Posterior vena cava (tissue), 2 donors: ENCODE measurements at regions of chr10 and their contacts with region 1.

Region 1: GRCh38 chr10:110225756-110226542 is 18.5 kb downstream of the MXI1 start:
- DNase-seq: peak; percentile 97

Region 2: GRCh38 chr10:110273474-110273873 is 47.5 kb after region 1 on chr10:
- intact Hi-C with region 1: loop called (anchors 5 kb)
- DNase-seq: peak; percentile 80

Region 3: DNA sequence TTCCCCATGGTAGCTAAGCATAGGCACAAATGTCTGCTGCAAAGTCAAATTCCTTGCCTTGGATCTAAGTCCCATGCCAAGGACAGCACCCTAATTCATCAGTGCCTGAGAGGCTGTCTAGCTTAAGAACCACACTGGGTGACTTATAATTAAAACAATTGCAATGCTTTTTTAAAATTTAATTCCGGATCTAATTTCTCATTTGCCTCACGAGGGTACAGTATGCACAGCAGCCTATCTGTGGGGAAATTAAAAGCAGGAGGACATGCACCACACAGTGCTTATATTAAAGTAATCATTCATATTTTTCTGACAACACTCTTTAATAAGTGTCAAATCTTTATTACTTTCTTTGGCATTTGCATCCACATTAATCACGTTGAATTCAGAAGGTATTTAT is 1578.8 kb after region 1 on chr10:
- intact Hi-C with region 1: no loop called
- DNase-seq: no peak

Region 4: DNA sequence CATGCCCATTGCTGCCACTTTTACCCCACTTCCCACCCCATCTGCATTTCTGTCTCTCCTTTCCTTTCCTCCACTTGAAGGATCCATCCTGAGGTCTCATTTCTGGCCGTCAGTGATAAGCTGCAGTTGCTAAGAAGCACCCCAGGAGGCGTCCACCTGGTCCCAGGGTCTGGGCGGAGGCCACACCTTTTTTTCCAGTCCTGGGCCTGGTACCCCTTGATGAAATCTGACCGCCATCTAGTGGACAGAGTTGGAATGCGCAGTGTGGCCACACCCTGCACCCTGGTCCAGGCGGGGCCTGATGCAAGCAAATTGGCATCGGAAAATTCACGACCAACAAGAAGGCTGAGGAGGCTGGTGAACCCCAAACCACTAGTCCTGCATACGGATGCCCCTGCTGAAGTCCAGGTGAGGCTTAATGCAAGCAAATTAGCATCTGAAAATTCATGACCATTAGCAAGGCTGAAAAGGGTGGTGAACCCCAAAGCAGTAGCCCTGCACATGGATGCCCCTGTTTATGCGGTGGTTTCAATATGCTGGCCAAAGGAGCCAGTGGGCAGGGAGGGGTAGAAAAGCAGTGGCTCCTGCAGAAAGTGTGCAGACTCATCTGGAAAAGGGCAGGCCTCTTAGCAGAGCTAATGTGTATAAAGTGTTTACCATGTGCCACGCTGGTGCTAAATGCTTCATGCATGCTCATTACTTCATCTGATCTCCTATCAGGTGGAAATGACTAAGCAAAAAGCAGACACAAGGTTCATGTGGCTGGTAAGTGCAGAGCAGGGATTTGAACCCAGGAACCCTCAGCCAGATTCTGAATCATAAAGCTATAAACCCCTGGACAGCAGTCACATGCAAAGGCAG is 1914.4 kb after region 1 on chr10:
- intact Hi-C with region 1: no loop called
- DNase-seq: peak; percentile 84